PC-9 (cell line): ENCODE measurements at regions of chr1 and their contacts with region 1.

Region 1: DNA sequence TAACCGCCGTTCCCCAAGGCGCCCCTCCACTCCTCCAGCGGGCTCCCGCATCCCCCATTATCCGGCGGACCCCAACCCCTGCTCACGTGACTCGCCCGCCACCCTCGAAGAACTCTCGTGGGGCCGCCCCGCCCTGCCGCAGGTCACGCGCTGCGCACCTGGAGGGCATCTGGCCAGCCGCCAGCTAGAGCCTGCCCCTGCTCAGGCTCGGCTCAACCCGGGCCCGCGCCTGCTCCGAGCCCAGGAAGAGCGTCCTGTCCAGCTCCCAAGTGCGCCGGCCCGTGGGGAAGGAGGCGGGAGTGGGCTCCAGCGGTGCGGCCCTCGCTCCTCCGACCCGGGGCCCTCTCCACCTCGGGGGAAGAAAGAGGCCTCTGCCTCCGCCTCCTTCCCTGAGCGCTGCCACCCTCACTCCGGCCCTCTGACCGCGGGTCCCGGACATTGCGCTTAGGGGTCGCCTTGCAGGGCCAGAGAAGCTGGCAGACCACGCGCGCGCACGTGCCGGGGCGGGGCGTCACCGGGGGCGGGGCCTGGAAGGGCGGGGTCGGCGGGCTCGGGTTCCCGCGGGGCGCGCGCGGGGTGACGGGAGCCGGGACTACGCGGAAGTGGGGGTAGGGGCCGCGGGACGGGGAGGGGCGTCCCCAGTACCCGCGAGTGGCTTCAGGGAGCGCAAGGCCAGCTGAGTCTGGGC is 28.4 kb downstream of the HMGN2 start:
- DNase-seq: peak; percentile 39 to 90
- H3K4me3 ChIP-seq: peak overlapping the region; percentile 52
- H3K27ac ChIP-seq: peak overlapping the region; percentile 68
- H3K4me1 ChIP-seq: no peaks in the 10 kb centered on the region
- H3K27me3 ChIP-seq: no peaks in the 10 kb centered on the region
- CTCF ChIP-seq: peak; percentile 1; the same call in 1 of the 2 replicates

Region 2: DNA sequence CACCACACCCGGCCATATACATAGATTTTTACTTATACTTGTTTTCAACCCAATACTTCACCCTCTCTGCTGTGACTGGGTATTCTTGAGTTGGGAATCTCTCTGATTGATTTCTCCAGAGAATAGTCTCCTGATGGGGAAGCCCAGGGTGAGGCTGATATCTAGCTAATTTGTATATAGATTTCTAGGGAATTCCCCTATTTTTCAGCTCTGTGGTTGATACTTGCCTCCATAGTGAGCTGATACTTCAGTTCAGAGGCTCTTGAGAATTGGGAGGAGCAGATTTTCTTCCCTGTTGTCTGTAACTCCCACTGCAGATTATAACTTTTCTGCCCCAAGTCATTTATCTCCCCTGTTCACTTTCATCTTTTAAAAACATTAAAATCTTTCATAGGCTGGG is 235.2 kb before region 1 on chr1:
- CTCF ChIA-PET with region 1: no interaction called
- POLR2A ChIA-PET with region 1: no interaction called
- intact Hi-C with region 1: no loop called
- DNase-seq: no peak
- H3K4me3 ChIP-seq: no peak overlapping the region
- H3K27ac ChIP-seq: no peak overlapping the region
- H3K4me1 ChIP-seq: no peaks in the 10 kb centered on the region
- H3K27me3 ChIP-seq: no peaks in the 10 kb centered on the region
- CTCF ChIP-seq: no peak

Region 3: GRCh38 chr1:26358411-26359384 is 141.9 kb before region 1 on chr1:
- CTCF ChIA-PET with region 1: no interaction called
- POLR2A ChIA-PET with region 1: interaction called, 19 read pairs
- intact Hi-C with region 1: no loop called
- DNase-seq: peak; percentile 88 to 97
- H3K4me3 ChIP-seq: no peak overlapping the region; the same call in 1 of the 2 replicates
- H3K27ac ChIP-seq: peak overlapping the region; percentile 84
- H3K4me1 ChIP-seq: peaks cover 54% of the 10 kb centered on the region
- H3K27me3 ChIP-seq: no peaks in the 10 kb centered on the region
- CTCF ChIP-seq: no peak

Region 4: DNA sequence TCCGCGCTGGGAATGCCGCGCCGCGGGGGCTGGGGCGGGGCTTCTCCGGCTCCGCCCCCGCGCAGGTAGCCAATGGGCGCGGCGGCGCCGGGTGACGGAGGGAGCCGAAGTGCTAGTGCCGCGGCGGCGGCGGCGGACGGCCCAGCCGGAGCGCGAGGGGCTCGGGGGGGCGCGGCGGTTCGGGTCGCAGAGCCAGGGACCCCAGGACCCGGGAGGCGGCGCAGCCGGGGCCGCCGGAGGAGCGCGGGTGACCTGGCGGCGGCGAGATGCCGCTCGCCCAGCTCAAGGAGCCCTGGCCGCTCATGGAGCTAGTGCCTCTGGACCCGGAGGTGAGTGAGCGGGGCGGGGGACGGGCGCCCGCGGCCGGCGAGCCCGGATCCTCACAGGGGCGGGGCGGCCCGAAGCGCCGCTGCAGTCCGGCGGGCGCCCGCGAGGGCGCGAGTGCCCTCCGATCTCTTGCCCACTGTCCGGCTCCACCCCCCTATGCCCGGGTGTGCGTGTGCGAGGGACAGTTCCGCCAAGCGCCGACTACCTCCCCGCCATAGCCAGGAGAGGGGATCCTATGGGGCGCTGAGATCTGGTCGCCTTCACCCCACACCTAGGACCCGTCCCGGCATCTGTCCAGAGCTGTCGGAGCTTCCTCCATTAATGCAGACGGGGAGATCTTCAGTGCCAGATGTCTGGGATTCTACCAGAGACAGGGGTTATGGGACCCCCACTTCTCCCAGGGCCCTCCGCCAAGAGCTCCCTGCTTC is 29.2 kb after region 1 on chr1 and contains the start of gene RPS6KA1:
- CTCF ChIA-PET with region 1: interaction called, 24 read pairs
- POLR2A ChIA-PET with region 1: interaction called, 4 read pairs
- intact Hi-C with region 1: loop called (anchors 1 kb)
- DNase-seq: peak in 1 of 2 experiments; percentile 73
- H3K4me3 ChIP-seq: peak within 1 kb of the TSS; percentile 80
- H3K27ac ChIP-seq: peak within 1 kb of the TSS; percentile 65
- H3K4me1 ChIP-seq: peaks cover 18% of the 10 kb centered on the region
- H3K27me3 ChIP-seq: no peaks in the 10 kb centered on the region
- CTCF ChIP-seq: no peak
- total RNA-seq, gene RPS6KA1: 60.5 and 68.5 TPM in 2 replicates

Region 5: GRCh38 chr1:26677306-26678115 is 176.9 kb after region 1 on chr1:
- CTCF ChIA-PET with region 1: interaction called, 4 read pairs
- POLR2A ChIA-PET with region 1: interaction called, 8 read pairs
- intact Hi-C with region 1: loop called (anchors 1 kb)
- DNase-seq: peak; percentile 86 to 91
- H3K4me3 ChIP-seq: no peak overlapping the region
- H3K27ac ChIP-seq: no peak overlapping the region
- H3K4me1 ChIP-seq: peaks cover 11% of the 10 kb centered on the region; the same call in 1 of the 2 replicates
- H3K27me3 ChIP-seq: no peaks in the 10 kb centered on the region
- CTCF ChIP-seq: peak; percentile 71

Region 6: GRCh38 chr1:26787706-26788514 is 287.3 kb after region 1 on chr1 and contains the start of gene PIGV:
- CTCF ChIA-PET with region 1: interaction called, 4 read pairs
- POLR2A ChIA-PET with region 1: no interaction called
- intact Hi-C with region 1: loop called (anchors 2 kb)
- DNase-seq: peak in 1 of 2 experiments; percentile 84
- H3K4me3 ChIP-seq: peak within 1 kb of the TSS; percentile 93
- H3K27ac ChIP-seq: peak within 1 kb of the TSS; percentile 92
- H3K4me1 ChIP-seq: peaks cover 52% of the 10 kb centered on the region
- H3K27me3 ChIP-seq: no peaks in the 10 kb centered on the region
- CTCF ChIP-seq: no peak
- total RNA-seq, gene PIGV: 30.8 and 31.9 TPM in 2 replicates

Region 7: DNA sequence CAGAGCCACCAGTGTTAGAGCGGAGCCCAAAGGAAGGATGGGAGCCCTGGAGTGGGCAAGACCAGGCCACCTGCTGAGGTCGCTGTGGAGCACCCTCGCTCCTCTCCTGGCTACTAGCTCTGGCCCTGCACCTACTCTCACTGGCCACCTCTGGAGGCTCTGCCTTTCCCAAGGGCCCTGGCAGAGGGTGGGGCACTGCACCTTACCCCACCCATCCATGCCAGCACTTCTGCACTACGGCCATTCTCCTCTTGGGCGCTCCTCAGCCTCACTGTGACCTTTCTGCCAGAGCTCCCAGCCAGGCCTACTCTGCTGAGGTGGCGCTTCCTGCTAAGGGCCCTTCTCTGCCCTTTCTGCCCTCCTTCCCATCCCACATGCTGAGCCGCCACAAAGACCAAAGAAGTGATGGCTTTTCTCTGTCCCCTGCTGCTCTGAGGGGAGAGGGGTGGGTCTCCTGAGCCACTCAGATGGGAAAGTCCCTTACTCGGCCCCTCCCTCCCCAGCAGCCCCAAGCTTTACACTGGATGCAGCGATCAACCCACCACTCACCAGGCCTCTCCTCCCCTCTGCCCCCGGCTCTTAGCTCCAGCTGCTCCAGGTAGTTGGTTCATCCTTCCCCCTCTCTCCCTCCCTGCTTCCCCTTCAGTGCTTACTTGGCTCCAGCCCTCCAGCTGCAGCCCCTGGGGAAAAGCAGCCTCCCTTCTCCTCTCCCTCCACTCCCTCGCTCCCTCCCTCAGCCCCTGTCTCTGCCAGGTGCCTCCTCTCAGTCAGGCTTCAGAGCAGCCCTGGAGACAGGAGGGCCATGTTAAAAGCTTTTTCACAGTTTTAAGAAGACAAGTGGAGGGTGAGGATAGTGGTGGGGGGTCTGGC is 806.5 kb after region 1 on chr1:
- CTCF ChIA-PET with region 1: no interaction called
- POLR2A ChIA-PET with region 1: no interaction called
- intact Hi-C with region 1: no loop called
- DNase-seq: peak in 1 of 2 experiments; percentile 42
- H3K4me3 ChIP-seq: no peak overlapping the region
- H3K27ac ChIP-seq: no peak overlapping the region
- H3K4me1 ChIP-seq: no peaks in the 10 kb centered on the region
- H3K27me3 ChIP-seq: no peaks in the 10 kb centered on the region
- CTCF ChIP-seq: no peak